ENCODE measurements at regions of chr13 and their contacts with region 1.

Region 1: GRCh38 chr13:78121459-78122348 is 203.1 kb upstream of the EDNRB start:
- DNase-seq: peak; percentile 69
- H3K4me3 Mint-ChIP-seq: no peak overlapping the region
- H3K27ac Mint-ChIP-seq: no peak overlapping the region
- H3K4me1 Mint-ChIP-seq: no peaks in the 10 kb centered on the region
- H3K27me3 Mint-ChIP-seq: peaks cover 75% of the 10 kb centered on the region
- CTCF ChIP-seq: peak; percentile 87

Region 2: DNA sequence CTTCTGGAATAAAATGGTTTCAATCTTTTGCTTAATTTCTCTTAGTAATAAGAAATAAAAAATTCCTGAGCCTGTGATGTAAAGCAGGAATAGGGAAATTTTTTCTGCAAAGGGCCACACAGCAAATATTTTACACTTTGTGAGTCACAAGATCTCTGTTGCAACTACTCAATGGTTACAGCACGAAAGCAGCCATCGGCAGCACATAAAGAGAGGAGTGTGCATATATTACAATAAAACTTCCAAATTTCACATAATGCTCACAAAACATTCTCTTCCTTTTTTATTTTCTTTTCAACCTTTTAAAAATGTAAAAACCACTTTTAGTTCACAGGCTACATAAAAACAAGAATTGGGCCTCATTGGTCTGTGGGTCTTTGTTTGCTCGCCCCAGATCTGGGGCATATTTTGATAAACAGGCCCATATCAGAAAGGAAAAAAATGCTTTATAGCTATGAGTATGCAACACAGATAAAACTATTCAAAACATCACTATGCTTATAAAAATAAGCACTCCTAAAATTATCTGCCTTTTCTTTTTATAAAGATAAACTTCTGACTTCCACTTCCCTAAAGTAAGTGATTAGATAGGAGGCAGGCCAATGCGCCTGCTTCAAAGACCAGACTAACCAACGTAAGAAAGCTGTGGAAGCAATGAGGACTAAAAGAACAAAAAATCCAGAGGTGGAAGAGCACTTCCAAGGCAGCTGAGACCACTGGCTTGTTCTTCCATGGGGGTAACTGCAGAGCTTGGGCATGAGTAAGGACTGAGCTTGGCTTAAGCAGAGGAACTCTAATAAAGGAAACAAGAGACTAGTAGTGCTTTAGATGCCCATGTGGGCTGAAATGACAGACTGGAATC is 821.3 kb before region 1 on chr13:
- CTCF ChIA-PET with region 1: no interaction called
- POLR2A ChIA-PET with region 1: no interaction called
- intact Hi-C with region 1: no loop called
- DNase-seq: peak; percentile 65
- H3K4me3 Mint-ChIP-seq: no peak overlapping the region
- H3K27ac Mint-ChIP-seq: no peak overlapping the region
- H3K4me1 Mint-ChIP-seq: peaks cover 25% of the 10 kb centered on the region
- H3K27me3 Mint-ChIP-seq: no peaks in the 10 kb centered on the region
- CTCF ChIP-seq: no peak

Region 3: GRCh38 chr13:77774181-77774580 is 347.5 kb before region 1 on chr13:
- CTCF ChIA-PET with region 1: interaction called, 35 read pairs
- POLR2A ChIA-PET with region 1: interaction called, 3 read pairs
- intact Hi-C with region 1: loop called (anchors 1 kb)
- DNase-seq: no peak
- H3K4me3 Mint-ChIP-seq: no peak overlapping the region
- H3K27ac Mint-ChIP-seq: no peak overlapping the region
- H3K4me1 Mint-ChIP-seq: no peaks in the 10 kb centered on the region
- H3K27me3 Mint-ChIP-seq: peaks cover 67% of the 10 kb centered on the region
- CTCF ChIP-seq: no peak

Region 4: DNA sequence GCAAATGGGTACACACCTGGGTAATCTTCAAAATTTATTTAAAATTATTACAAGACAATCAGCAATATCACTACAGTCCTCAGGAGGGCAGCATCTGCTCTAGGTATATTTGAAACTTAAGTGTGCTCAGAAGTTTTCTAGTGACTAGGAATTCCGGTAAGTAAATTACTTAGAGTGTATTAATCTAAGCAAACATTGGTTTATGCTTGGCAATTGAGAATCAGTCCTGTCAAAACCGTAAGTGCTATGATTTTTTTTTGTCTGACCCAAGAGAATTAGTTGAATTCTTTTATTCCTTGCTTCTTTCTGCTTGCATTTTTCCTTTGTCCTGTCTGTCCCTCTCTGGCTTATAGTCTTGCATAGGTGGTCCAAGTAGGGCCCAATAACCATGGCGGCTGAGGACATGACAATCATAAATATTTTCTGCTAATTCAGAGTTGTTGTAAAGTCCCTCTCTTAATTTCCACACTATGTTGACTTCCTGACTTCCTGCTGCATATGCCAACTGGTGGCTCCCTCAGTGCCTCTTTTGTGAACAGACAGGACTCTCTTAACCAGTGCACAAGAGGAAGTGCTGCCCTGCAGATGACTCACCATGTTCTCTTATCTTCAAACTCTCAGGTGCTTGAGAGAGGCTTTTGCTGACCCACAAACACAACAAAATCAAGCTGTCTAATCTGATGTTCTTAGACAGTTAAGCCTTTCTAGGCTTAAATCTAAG is 342.0 kb before region 1 on chr13:
- CTCF ChIA-PET with region 1: interaction called, 105 read pairs
- POLR2A ChIA-PET with region 1: interaction called, 3 read pairs
- intact Hi-C with region 1: loop called (anchors 1 kb)
- DNase-seq: peak; percentile 63
- H3K4me3 Mint-ChIP-seq: no peak overlapping the region
- H3K27ac Mint-ChIP-seq: no peak overlapping the region
- H3K4me1 Mint-ChIP-seq: no peaks in the 10 kb centered on the region
- H3K27me3 Mint-ChIP-seq: peaks cover 48% of the 10 kb centered on the region
- CTCF ChIP-seq: peak; percentile 73

Region 5: GRCh38 chr13:77786695-77787287 is 334.9 kb before region 1 on chr13:
- CTCF ChIA-PET with region 1: interaction called, 105 read pairs
- POLR2A ChIA-PET with region 1: no interaction called
- intact Hi-C with region 1: no loop called
- DNase-seq: no peak
- H3K4me3 Mint-ChIP-seq: no peak overlapping the region
- H3K27ac Mint-ChIP-seq: no peak overlapping the region
- H3K4me1 Mint-ChIP-seq: no peaks in the 10 kb centered on the region
- H3K27me3 Mint-ChIP-seq: peaks cover 19% of the 10 kb centered on the region
- CTCF ChIP-seq: no peak

Region 6: DNA sequence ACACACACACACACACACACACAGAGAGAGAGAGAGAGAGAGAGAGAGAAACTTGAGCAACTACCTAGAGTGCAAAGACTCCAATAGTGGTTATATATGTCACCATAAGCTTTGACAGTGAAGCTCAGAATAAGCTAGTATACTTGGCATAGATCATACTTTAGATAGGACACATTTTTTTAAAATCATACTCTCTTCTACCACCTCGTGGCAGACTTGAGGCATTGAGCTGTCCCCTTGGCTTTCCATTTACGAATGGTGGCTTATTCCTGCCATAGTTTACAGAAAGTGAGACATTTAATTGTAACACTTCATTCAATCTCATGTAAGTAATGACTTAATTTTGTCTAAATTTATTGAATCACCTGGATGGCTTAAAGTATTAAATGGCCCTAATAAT is 311.3 kb before region 1 on chr13:
- CTCF ChIA-PET with region 1: interaction called, 25 read pairs
- POLR2A ChIA-PET with region 1: interaction called, 4 read pairs
- intact Hi-C with region 1: loop called (anchors 1 kb)
- DNase-seq: peak; percentile 59
- H3K4me3 Mint-ChIP-seq: no peak overlapping the region
- H3K27ac Mint-ChIP-seq: no peak overlapping the region
- H3K4me1 Mint-ChIP-seq: peaks cover 6% of the 10 kb centered on the region
- H3K27me3 Mint-ChIP-seq: peaks cover 43% of the 10 kb centered on the region
- CTCF ChIP-seq: peak; percentile 35

Region 7: DNA sequence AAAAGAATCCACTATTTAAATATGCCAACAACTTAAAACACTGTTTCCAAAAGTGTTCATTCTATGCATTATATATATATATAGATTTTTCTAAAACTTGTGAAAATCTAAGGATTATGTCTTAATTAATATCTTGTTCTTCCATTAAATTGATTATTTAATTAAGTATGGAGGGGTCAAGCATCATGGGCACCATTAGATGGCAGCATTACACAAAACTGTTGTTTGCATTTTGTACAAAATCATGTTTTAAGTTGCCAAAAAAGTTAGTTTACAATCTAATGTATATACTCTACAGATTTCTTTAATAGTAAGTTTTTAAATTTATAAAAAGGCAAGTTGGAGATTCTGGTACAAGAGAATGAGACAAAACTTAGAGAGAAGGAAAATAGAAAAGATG is 10.1 kb after region 1 on chr13:
- CTCF ChIA-PET with region 1: interaction called, 13 read pairs
- POLR2A ChIA-PET with region 1: no interaction called
- intact Hi-C with region 1: no loop called
- DNase-seq: no peak
- H3K4me3 Mint-ChIP-seq: no peak overlapping the region
- H3K27ac Mint-ChIP-seq: no peak overlapping the region
- H3K4me1 Mint-ChIP-seq: no peaks in the 10 kb centered on the region
- H3K27me3 Mint-ChIP-seq: peaks cover 36% of the 10 kb centered on the region
- CTCF ChIP-seq: peak; percentile 21

Region 8: GRCh38 chr13:78595495-78596398 is 474.0 kb after region 1 on chr13:
- CTCF ChIA-PET with region 1: no interaction called
- POLR2A ChIA-PET with region 1: no interaction called
- intact Hi-C with region 1: no loop called
- DNase-seq: no peak
- H3K4me3 Mint-ChIP-seq: no peak overlapping the region
- H3K27ac Mint-ChIP-seq: no peak overlapping the region
- H3K4me1 Mint-ChIP-seq: no peaks in the 10 kb centered on the region
- H3K27me3 Mint-ChIP-seq: peaks cover 78% of the 10 kb centered on the region
- CTCF ChIP-seq: no peak